Activated CD8-positive, alpha-beta memory T cell treated with anti-CD3 and anti-CD28 coated beads, Interleukin-2, amount 10 ng/mL, durations not matched to agents 7 days and 5 days (primary cell): ENCODE measurements at regions of chr3 and their contacts with region 1.

Region 1: DNA sequence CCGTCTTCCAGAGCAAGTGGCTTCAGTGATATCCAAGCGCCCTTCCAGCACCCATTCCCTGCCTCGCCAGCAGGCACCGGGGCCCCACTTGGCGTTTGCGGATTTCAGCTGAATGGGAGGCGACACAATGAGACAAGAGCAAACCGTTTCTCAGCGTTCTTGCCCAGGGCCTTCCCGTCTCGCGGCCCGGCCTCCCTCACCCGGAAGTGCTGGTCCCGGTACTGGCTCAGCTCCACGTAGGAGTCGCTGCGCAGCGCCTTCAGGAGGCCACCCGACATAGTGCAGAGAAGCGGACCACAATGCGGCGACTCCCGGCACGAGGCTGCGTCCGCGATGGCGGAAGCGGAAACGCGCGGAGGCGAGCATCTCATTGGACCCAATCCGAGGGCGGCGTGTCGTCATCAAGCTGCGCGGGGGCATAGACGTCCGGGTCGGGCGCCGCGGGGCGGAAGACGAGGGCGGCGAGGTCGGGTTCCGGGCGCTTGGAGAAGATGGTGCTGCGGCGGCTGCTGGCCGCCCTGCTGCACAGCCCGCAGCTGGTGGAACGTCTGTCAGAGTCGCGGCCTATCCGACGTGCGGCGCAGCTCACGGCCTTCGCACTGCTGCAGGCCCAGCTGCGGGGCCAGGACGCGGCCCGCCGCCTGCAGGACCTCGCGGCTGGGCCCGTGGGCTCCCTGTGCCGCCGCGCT is at the start of gene NCBP2:
- DNase-seq: peak; percentile 99
- ATAC-seq: peak; percentile 91
- H3K4me3 Mint-ChIP-seq: peak within 1 kb of the TSS; percentile 87
- H3K27ac Mint-ChIP-seq: peak within 1 kb of the TSS; percentile 92
- H3K4me1 Mint-ChIP-seq: peaks cover 50% of the 10 kb centered on the region
- H3K27me3 Mint-ChIP-seq: no peaks in the 10 kb centered on the region
- total RNA-seq, gene NCBP2: 52.5 to 68.9 TPM

Region 2: DNA sequence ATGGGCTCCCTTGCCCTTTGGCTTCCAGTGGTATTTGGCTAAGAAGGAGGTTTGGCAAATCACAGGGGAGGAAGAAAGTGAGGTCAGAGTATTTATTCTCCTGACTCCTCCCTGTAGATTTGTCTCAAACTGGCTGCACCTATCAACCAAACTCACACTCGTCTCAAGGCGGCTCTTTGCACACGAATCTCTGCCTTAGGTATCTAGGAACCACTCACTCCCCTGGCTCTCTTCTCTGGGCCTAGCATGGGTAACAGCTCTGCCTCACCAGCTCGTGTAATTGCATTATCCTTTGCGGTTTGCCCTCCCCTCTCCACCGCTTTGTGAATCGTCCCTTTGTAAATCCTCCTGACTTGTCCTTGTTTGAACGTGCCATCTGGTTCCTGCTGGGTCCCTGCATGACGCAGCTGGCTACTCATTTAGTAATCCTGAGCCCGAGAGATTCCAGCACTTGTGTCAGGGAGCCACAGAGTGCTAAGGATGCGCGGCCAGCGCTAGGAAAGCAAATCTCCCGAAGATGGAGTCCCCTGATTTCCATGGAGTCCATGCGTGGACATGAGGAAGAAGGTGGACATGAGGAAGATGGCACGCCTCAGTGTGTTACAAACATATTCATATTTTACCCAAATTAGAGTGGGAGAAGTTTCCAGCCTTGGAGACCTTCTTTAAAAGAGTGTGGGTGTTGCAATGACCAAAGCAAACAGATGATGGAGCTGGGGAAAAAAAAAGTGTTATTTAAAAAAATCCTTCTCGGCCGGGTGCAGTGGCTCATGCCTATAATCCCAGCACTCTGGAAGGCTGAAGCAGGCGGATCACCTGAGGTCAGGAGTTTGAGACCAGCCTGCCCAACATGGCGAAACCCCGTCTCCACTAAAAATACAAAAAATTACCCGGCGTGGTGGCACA is 276.2 kb before region 1 on chr3:
- CTCF ChIA-PET with region 1: no interaction called
- DNase-seq: no peak
- ATAC-seq: no peak
- H3K4me3 Mint-ChIP-seq: no peak overlapping the region
- H3K27ac Mint-ChIP-seq: no peak overlapping the region
- H3K4me1 Mint-ChIP-seq: peaks cover 3% of the 10 kb centered on the region
- H3K27me3 Mint-ChIP-seq: peaks cover 2% of the 10 kb centered on the region

Region 3: GRCh38 chr3:196837819-196838420 is 104.5 kb before region 1 on chr3:
- CTCF ChIA-PET with region 1: interaction called, 12 read pairs
- DNase-seq: peak; percentile 82
- ATAC-seq: peak; percentile 91
- H3K4me3 Mint-ChIP-seq: no peak overlapping the region
- H3K27ac Mint-ChIP-seq: no peak overlapping the region
- H3K4me1 Mint-ChIP-seq: peaks cover 6% of the 10 kb centered on the region
- H3K27me3 Mint-ChIP-seq: no peaks in the 10 kb centered on the region

Region 4: DNA sequence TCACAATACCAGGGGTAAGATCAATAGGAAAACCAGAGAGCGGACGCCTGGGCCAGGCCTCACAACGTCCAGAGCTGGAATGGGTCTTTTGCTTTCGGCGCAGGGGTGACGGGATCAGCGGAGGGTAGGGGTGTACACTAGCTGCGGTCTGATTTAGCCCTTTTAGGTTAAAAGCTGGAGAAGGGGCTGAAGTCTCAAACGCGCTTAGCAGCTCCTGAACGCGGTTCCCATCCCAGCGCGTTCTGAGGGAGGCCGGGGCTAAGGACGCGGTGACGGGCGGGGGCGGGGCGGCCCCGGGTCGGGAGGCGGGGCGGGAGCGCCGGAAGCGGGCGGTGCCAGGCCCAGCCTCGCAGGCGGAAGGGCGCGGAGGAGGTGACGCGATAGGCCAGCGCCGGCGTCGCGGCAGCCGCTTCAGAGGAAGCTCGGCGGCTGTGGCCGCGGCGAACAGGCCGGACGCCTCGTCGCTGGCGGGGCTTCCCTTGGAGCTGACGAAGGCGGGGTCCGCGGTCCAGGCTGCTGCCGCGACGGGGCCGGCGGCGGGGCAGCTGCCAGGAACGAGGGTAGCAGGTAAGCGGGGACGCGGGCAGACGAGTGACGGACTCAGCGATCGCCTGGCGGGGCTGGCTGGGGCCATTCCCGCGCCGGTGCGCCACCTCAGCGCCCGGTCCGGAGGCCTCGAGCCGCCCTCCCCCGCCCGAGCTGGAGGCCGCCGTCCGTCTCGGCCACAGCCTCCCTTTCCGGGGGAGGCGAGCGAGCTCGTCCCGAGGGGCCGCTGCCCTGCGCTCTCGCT is 74.7 kb before region 1 on chr3 and contains the start of gene SENP5:
- CTCF ChIA-PET with region 1: interaction called, 23 read pairs
- DNase-seq: peak; percentile 93
- ATAC-seq: peak; percentile 97
- H3K4me3 Mint-ChIP-seq: peak within 1 kb of the TSS; percentile 99
- H3K27ac Mint-ChIP-seq: peak within 1 kb of the TSS; percentile 97
- H3K4me1 Mint-ChIP-seq: peaks cover 26% of the 10 kb centered on the region
- H3K27me3 Mint-ChIP-seq: no peaks in the 10 kb centered on the region
- total RNA-seq, gene SENP5: 39.8 to 42.0 TPM

Region 5: GRCh38 chr3:196969660-196970546 is 27.5 kb after region 1 on chr3:
- CTCF ChIA-PET with region 1: interaction called, 22 read pairs
- DNase-seq: peak; percentile 70
- ATAC-seq: peak; percentile 74
- H3K4me3 Mint-ChIP-seq: peak overlapping the region; percentile 52
- H3K27ac Mint-ChIP-seq: peak overlapping the region; percentile 42
- H3K4me1 Mint-ChIP-seq: peaks cover 17% of the 10 kb centered on the region
- H3K27me3 Mint-ChIP-seq: peaks cover 22% of the 10 kb centered on the region